PC-9 (cell line): ENCODE measurements at regions of chr3 and their contacts with region 1.

Region 1: DNA sequence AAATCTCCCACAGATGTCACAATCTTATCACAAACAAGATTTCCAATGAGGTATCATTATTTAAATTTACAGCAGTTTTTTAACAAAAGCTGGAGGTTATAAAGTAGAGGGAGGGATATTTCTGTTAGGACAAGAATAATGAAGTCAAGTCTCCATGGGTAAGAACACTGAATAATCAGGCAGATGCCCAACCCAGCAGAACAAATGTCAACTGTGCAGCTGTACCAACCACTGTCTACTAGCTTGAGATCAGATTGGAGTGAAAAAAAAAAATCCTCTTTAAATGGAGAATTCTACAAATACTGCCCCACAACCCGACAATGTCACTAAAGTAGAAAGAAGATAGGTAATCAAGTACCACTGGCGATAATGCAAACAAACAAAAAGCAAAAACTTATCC is 30.3 kb downstream of the DHX36 start:
- DNase-seq: no peak
- H3K4me3 ChIP-seq: no peak overlapping the region
- H3K27ac ChIP-seq: no peak overlapping the region
- H3K4me1 ChIP-seq: no peaks in the 10 kb centered on the region
- H3K27me3 ChIP-seq: no peaks in the 10 kb centered on the region
- CTCF ChIP-seq: no peak

Region 2: GRCh38 chr3:154274348-154274747 is 19.7 kb before region 1 on chr3:
- CTCF ChIA-PET with region 1: interaction called, 15 read pairs
- POLR2A ChIA-PET with region 1: interaction called, 6 read pairs
- intact Hi-C with region 1: no loop called
- DNase-seq: no peak
- H3K4me3 ChIP-seq: no peak overlapping the region
- H3K27ac ChIP-seq: no peak overlapping the region
- H3K4me1 ChIP-seq: no peaks in the 10 kb centered on the region
- H3K27me3 ChIP-seq: no peaks in the 10 kb centered on the region
- CTCF ChIP-seq: no peak